CD14-positive monocyte (primary cell): ENCODE measurements at regions of chr2 and their contacts with region 1.

Region 1: DNA sequence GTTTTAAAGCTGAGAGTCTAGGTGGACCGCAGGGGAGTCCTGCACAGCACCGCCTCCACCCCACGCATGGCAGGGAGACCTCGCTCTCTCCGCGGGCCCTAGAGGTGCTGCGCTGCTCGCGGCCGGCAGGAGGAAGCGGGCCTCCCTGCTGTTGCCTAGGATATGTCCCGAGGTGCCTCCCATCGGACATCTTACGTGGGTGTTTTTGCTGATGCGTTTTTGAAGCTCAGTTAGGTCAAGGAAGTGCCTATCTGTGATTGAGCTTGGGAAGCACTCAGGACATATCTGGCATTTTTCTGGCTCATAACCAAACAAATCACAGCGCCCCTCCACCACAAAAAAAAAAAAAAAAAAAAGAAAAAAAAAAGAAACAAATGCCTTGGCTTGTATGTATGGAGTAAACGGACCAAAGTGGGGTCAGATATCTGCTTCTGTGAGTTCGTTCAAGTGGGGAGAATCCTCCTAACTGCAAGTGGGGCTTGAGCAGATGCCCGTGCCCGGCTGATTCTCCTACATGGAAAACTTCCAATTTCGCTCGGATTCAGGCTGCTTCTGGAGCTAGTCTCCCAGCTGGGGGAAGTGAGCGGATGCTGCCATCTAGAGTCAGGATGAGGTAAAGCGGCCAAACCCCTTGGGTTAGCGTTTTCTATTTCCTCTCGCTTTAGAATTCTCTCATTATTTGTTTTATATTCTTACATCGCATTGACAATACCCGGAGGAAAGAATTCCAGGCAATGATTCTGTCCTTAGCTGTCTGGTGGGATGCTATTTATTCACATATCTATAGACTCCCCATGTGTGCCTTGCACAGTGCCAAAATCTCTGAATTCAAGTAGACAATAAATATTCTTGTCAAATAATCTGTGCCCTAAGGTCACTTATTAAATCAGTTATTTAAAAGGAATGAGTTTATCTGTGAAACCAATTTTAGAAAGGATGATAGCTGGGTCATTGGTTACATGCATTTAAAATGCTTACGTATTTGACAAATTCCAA is 95.3 kb downstream of the CD8B2 start:
- DNase-seq: peak; percentile 50 to 66 (median 60)
- H3K4me3 ChIP-seq: peak overlapping the region; percentile 24 to 70 (median 46)
- H3K4me3 Mint-ChIP-seq: peak overlapping the region; percentile 84 to 96
- H3K27ac ChIP-seq: no peak overlapping the region
- H3K27ac Mint-ChIP-seq: peak overlapping the region in 3 of 7 donors; percentile 37 to 78 (median 59)
- H3K4me1 ChIP-seq: peaks cover 8 to 10% of the 10 kb centered on the region in 2 donors
- H3K4me1 Mint-ChIP-seq: peaks cover 19% of the 10 kb centered on the region
- H3K27me3 ChIP-seq: peaks cover 6 to 14% of the 10 kb centered on the region in 2 donors
- H3K27me3 Mint-ChIP-seq: peaks cover 17 to 37% (median 31%) of the 10 kb centered on the region in 3 donors
- CTCF ChIP-seq: peak; percentile 90

Region 2: DNA sequence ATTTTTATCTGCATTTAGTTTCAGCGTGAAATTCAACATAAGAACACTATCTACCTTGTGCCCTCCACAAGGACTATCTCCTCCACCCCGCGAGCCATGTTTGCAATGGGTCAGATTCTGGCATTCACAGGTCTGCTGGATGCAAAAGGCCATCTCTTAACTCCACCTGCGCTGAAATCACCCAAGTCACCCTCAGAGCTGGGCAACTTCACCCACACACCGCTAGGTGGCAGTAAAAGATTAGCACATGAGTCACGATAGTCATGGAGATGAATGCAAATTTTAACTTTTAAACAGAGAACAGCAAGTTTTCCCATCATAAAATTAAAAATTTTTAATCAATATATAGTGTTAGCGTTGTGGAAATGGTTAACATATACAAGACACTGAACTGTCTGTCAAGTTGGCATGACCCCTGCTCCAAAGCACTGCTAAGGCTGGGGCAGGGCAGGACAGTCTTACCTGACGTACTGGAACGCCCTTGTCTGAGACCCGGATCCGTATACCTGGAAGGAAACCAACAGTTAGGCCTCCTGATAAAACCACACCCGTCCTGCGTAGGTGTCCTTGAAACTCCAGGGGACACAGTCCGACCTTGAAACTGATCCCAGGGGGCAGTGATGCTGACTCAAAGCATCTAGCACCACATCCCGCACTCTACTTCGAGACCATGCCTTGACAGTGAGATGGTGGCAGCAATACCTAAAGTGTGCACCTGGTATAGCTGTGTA is 477.9 kb before region 1 on chr2:
- intact Hi-C with region 1: loop called (anchors 2 to 5 kb)
- DNase-seq: peak; percentile 49 to 64 (median 62)
- H3K4me3 ChIP-seq: no peak overlapping the region
- H3K4me3 Mint-ChIP-seq: no peak overlapping the region
- H3K27ac ChIP-seq: no peak overlapping the region
- H3K27ac Mint-ChIP-seq: peak overlapping the region in 1 of 7 donors; percentile 50
- H3K4me1 ChIP-seq: no peaks in the 10 kb centered on the region
- H3K4me1 Mint-ChIP-seq: no peaks in the 10 kb centered on the region
- H3K27me3 ChIP-seq: no peaks in the 10 kb centered on the region
- H3K27me3 Mint-ChIP-seq: peaks cover 0 to 4% (median 0%) of the 10 kb centered on the region in 3 donors
- CTCF ChIP-seq: peak; percentile 94

Region 3: DNA sequence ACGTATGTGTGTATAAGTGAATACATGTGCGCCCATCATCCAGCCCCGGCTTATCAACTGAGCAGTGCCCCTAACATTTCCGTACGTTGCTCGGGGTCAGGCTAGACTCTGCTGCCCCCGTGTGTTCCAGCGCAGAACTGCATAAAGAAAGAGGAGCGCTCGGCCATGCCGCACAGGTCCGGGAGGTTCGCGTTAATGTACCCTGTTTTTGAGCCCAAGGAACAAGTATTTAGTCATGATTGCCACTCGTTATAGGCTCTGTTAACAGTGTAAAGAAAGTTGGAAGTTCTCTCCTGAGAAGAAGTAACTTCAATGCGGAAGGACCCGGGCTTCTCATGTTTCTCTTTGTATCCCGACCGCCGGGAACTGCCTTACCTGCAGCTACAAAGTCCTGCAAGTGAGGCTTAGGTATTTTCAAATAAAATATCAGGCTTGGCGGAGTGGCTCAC is 39.6 kb before region 1 on chr2:
- intact Hi-C with region 1: no loop called
- DNase-seq: peak; percentile 58 to 73 (median 69)
- H3K4me3 ChIP-seq: peak overlapping the region in 1 of 3 experiments; percentile 45
- H3K4me3 Mint-ChIP-seq: peak overlapping the region; percentile 63 to 88
- H3K27ac ChIP-seq: no peak overlapping the region
- H3K27ac Mint-ChIP-seq: peak overlapping the region in 4 of 7 donors; percentile 66 to 80 (median 76)
- H3K4me1 ChIP-seq: peaks cover 36 to 43% of the 10 kb centered on the region in 2 donors
- H3K4me1 Mint-ChIP-seq: peaks cover 38% of the 10 kb centered on the region
- H3K27me3 ChIP-seq: no peaks in the 10 kb centered on the region
- H3K27me3 Mint-ChIP-seq: peaks cover 2 to 9% (median 5%) of the 10 kb centered on the region in 3 donors
- CTCF ChIP-seq: peak; percentile 97

Region 4: DNA sequence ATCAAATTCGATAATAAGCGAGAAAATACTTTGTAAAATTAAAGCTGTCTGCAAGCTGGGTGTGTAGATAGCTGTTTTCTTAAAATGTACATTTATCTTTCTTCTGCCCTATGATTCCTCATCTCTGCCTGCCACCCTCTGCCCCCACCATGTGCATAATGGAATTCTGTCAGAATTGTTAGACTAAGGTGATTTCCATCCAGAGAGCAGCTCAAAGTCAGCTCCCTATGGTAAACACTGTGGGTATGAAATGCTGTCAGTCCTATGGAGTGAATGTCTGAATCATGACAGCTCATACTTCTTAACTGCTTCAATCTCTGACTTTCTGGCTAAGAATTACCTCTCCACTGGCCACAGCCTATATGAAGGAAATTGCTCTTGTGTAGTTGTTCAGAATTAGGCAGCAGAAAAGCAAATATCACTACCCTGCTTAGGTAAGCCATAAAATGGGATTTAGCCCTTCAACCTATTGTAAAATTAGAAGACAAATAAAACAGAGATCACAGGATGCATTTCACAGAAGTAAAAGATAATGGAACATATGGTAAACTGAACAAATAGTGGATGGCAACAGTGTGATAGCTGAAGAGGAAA is 42.4 kb after region 1 on chr2:
- intact Hi-C with region 1: no loop called
- DNase-seq: no peak
- H3K4me3 ChIP-seq: no peak overlapping the region
- H3K4me3 Mint-ChIP-seq: no peak overlapping the region
- H3K27ac ChIP-seq: no peak overlapping the region
- H3K27ac Mint-ChIP-seq: peak overlapping the region in 1 of 7 donors; percentile 11
- H3K4me1 ChIP-seq: no peaks in the 10 kb centered on the region
- H3K4me1 Mint-ChIP-seq: no peaks in the 10 kb centered on the region
- H3K27me3 ChIP-seq: no peaks in the 10 kb centered on the region
- H3K27me3 Mint-ChIP-seq: peaks cover 0 to 3% (median 0%) of the 10 kb centered on the region in 3 donors
- CTCF ChIP-seq: no peak